Cardiac septum (tissue), 1 donor: ENCODE measurements at regions of chr12 and their contacts with region 1.

Region 1: GRCh38 chr12:69879041-69879960 is 54.3 kb downstream of the MYRFL start:
- DNase-seq: no peak

Region 2: GRCh38 chr12:69630191-69630590 is 249.1 kb before region 1 on chr12:
- intact Hi-C with region 1: no loop called
- DNase-seq: no peak

Region 3: GRCh38 chr12:70221626-70222025 is 342.3 kb after region 1 on chr12:
- intact Hi-C with region 1: no loop called
- DNase-seq: no peak

Region 4: DNA sequence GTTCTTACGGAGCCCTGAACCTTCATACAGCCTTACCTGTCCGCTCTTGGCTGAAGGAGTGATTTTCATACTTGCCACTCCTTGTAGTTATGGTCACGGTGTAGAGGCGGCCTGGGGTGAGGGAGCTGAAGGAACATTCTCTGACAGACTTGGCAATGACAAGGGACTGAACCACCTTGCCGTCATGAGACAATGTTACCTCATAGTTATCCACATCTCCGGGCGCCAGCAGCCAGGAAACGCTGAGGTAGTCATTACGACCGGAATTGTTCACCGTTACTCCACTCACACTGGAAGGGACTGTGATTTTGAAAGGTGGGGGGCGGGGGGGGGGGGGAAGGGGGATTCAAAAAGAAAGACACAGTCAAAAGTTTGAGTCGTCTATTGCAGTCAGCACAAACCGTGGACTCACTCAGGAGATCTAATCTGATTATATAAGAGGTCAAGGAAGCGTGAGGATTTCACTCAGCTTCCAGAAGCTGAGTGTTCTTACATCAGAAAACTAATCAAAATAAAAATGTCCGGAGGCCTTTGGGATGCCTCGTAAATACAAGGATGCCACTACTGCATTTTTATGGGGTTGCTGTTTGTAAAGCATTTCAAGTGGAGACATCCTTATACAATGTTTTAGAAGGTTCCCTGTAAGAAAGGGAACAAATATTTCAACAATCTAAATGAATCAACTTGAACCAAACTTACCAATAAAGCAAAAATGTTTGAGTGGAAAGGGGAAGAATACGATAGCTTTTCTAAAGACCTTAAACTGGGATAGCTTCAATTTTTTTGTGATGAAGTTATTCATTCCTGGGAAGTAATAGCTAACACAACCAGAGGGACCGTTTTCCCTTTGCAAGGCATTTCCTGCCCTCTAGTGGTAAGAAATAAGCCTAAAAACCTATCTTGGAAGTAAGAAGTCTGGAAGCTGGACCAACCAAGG is 697.3 kb after region 1 on chr12:
- intact Hi-C with region 1: loop called (anchors 5 kb)
- DNase-seq: no peak

Region 5: DNA sequence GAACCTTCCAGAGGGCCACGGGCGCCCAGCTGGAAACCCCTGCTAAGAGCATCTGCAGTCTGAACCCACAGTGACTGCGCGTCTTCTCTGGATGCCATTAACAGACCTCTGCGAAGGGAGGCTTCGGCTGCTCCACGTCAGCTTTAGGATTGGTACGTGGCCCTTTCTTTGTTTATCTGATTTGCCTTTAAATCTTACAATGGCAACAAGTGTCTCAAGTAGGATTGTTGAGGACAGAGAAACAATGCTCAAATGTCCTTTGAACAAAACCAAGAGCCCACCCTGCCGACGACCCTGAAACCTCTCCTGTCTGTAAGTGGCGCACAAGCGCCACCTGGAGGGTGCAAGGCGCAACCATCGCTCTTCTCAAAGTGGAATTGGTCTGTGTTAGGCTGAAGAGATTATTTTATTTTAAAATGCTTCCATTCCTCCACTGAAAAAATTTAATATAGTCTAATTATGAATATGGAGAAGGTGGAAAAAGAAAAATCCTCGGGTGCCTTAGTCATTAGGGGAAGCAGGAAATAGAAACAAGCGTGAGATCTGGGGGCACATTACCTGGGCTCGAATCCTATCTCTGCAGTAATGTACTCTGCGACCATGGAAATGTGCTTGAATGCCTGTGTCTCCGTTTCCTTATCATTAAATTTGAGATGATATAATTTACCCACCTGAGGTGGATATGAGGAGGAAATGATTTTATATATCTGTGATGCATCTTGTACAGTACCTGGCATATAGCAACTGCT is 840.5 kb after region 1 on chr12:
- intact Hi-C with region 1: loop called (anchors 5 kb)
- DNase-seq: no peak